ENCODE measurements at regions of chr5 and their contacts with region 1.

Region 1: DNA sequence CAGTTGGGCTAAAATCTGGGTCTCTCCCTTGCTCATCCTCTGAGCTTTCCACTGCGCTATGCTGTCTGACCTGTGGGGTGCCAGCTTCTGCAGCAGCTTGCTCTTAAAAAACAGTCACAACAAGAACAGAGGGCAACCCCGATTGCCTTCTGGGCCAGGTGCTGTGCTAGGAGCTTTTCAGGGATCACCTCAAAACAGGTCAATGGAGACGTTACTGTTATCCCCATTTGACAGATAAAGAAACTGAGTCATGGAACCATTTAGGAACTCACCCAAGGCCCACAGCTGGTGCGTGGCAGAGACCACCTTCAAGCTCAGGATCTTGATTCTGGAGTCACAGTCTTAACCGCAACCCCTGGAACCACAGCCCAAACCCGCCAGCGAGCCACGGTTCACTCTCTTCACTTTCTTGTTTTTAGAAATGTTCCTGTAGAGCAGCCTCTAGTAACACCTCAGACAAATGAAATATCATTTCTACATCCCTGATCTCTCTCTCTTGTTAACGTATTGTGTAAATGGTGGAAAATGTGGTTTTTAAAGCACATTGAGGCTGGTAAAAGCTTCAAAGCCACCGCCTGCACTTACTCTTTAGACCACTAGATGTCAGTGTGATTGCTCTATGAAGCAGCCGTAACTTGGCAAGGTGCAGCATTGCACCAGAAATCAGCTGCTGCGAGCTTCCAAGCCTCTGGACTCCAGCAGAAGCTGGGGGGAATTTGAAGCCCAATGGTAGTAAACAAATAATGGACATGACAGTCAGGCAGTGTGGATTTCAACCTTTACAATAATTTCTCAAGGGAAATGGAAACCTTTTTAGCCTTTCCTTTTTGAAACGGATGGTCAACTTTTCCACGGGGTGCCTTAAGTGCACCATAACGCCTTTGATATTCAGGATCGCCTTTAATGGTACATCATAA is 1.7 kb downstream of the FYB1 start:
- DNase-seq: peak; percentile 71 to 88 (median 72)
- ATAC-seq: peak; percentile 80 to 85
- H3K4me3 ChIP-seq: no peak overlapping the region
- H3K27ac ChIP-seq: no peak overlapping the region
- H3K4me1 ChIP-seq: no peaks in the 10 kb centered on the region
- H3K27me3 ChIP-seq: no peaks in the 10 kb centered on the region

Region 2: DNA sequence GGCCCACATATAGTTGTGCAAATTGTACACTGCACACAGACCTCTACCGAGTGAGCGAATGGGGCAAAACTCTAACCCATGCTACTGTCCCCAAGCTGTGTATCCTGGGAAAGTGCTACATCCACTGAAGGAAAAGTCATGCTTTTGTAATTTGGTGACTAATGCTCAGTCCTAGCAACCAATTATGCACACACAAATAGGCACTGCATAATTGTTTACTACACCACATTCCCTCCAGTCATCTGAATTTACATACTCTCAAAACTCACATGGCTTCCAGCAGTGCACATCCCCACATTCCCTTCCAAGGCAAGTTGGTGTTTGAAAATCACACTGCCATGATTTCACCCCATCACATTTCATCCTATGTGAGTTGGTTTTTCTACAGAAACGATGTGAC is 497.7 kb before region 1 on chr5:
- intact Hi-C with region 1: no loop called
- DNase-seq: no peak
- ATAC-seq: no peak
- H3K4me3 ChIP-seq: no peak overlapping the region
- H3K27ac ChIP-seq: peak overlapping the region; percentile 25
- H3K4me1 ChIP-seq: peaks cover 12% of the 10 kb centered on the region
- H3K27me3 ChIP-seq: no peaks in the 10 kb centered on the region

Region 3: GRCh38 chr5:39283231-39283818 is 65.7 kb after region 1 on chr5:
- intact Hi-C with region 1: loop called in 2 of 4 experiments (anchors 5 to 10 kb)
- DNase-seq: no peak
- ATAC-seq: peak; percentile 71 to 80
- H3K4me3 ChIP-seq: no peak overlapping the region
- H3K27ac ChIP-seq: no peak overlapping the region
- H3K4me1 ChIP-seq: no peaks in the 10 kb centered on the region
- H3K27me3 ChIP-seq: no peaks in the 10 kb centered on the region

Region 4: GRCh38 chr5:39328731-39329130 is 111.1 kb after region 1 on chr5:
- intact Hi-C with region 1: no loop called
- DNase-seq: no peak
- ATAC-seq: no peak
- H3K4me3 ChIP-seq: no peak overlapping the region
- H3K27ac ChIP-seq: no peak overlapping the region
- H3K4me1 ChIP-seq: no peaks in the 10 kb centered on the region
- H3K27me3 ChIP-seq: no peaks in the 10 kb centered on the region

Measured in right cardiac atrium (tissue), 5 donors.